ENCODE measurements at regions of chr14 and their contacts with region 1.

Region 1: GRCh38 chr14:105045710-105046326 is 19.4 kb downstream of the GPR132 start:
- DNase-seq: peak; percentile 94
- H3K4me3 Mint-ChIP-seq: no peak overlapping the region
- H3K27ac Mint-ChIP-seq: no peak overlapping the region
- H3K4me1 Mint-ChIP-seq: peaks cover 15% of the 10 kb centered on the region
- H3K27me3 Mint-ChIP-seq: peaks cover 4% of the 10 kb centered on the region

Region 2: GRCh38 chr14:104554608-104555429 is 491.0 kb before region 1 on chr14:
- CTCF ChIA-PET with region 1: no interaction called
- POLR2A ChIA-PET with region 1: no interaction called
- DNase-seq: no peak
- H3K4me3 Mint-ChIP-seq: no peak overlapping the region
- H3K27ac Mint-ChIP-seq: no peak overlapping the region
- H3K4me1 Mint-ChIP-seq: no peaks in the 10 kb centered on the region
- H3K27me3 Mint-ChIP-seq: no peaks in the 10 kb centered on the region

Region 3: DNA sequence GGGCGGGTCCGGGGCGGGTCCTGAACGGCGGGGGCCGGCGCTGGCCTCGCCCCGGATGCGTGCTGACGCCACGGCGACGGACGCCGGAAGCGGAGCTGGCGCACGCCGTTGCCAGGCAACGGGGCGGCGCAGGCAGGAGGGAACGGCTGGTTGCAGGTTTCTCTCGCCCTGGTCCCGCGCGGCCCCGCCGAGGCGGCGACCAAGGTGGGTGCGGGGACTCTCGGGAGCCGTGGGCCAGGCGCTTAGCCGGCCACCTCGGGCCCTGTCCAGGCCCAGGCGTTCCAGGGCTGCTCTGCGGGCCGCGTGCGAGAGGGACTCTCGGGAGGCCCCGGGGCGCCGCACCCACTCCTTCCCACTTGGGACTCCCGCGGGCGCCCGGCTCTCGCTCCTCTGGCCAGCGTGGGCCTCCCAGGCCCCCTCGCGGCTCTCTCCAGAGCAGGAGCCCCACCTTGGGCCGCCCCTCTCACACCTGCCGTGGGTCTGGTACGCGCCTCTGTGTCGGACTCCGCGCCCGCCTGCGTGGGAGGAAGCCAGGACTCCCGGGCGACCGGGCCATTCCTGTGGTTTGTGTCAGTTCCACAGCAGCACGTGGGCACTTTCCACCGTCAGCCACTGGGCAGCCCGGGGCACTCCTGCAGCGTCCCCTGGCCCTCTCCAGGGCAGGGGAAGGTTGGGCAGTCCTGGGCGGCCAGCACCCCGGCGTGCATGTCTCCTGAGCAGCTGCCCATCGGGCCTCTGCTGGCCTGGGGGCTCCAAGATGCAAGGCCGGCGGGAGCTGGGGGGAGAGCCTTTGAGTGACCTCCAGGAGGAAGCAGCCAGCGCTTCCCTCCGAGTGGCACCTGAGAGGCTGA is 59.9 kb before region 1 on chr14 and contains the start of gene CLBA1:
- CTCF ChIA-PET with region 1: interaction called, 23 read pairs
- POLR2A ChIA-PET with region 1: no interaction called
- DNase-seq: peak; percentile 89
- H3K4me3 Mint-ChIP-seq: peak within 1 kb of the TSS; percentile 69
- H3K27ac Mint-ChIP-seq: peak within 1 kb of the TSS; percentile 87
- H3K4me1 Mint-ChIP-seq: peaks cover 11% of the 10 kb centered on the region
- H3K27me3 Mint-ChIP-seq: peaks cover 3% of the 10 kb centered on the region
- total RNA-seq, gene CLBA1: 0.60 to 0.77 TPM

Region 4: DNA sequence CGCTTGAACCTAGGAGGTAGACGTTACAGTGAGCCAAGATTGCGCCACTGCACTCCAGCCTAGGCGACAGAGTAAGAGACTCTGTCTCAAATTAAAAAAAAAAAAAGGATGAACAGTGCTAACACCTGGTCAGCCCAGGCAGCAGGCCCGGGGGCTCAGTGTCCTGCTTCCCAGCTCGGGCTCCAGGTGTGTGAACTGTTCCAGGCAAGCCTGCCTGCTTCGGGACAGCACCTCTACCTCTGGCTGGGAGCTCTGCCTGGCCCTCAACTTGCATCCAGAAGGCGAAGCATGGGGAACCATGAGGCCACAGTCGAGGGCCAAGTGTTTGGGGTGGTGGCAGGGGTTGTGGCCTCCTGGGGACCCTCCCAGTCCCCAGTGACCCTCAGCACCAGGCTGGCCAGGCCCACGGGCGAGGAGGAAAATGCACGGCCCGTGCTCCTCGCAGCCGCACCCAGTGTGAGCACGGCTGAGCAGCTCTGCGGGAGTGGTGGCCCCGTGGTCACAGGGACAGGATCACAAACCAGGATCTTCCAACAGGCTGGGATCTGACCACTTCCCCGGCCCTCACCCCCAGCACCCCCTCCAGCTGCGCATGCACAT is 40.4 kb before region 1 on chr14:
- CTCF ChIA-PET with region 1: interaction called, 12 read pairs
- POLR2A ChIA-PET with region 1: no interaction called
- DNase-seq: no peak
- H3K4me3 Mint-ChIP-seq: no peak overlapping the region
- H3K27ac Mint-ChIP-seq: peak overlapping the region; percentile 13
- H3K4me1 Mint-ChIP-seq: peaks cover 2% of the 10 kb centered on the region
- H3K27me3 Mint-ChIP-seq: no peaks in the 10 kb centered on the region

Region 5: DNA sequence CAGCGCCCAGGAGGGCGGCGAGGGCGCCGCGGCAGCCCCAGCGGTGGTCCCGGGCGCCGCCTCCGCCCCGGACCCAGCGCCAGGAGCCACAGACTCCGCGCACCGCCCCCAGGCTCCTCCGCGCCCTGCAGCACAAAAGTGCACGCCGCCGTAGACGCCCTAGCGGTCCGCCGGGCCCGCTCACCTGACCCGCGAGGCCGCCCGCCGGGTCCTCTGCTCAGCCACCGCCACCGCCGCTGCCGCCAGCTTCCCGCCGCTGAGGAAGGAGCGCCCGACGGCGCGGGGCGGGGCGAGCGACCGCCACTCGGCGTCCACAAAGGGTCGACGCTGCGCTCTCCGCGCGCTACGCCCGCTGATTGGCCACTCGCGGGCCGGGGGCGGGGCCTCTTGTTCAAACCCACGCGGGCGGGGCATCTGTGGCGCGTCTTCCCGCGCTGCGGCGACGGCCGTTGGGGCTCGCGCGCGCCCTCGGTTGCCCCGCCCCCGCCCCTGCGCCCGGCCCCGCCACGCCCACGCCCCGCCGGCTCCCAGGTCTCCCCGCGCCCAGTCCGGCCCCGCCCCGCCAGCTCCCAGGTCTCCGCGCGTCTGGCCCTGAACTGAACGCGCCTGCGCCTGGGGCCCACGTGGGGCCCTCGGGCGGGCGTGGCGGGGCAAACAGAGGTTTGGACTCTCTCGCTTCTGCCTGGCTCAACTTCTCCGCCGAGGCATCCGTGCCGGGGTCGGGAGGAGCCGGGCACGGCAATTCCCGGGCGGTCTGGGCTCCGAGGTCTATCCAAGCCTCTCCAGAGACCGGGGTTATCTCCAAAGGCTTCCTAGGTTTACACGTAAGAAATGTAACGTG is 24.8 kb before region 1 on chr14 and contains the start of gene CDCA4:
- CTCF ChIA-PET with region 1: interaction called, 26 read pairs
- POLR2A ChIA-PET with region 1: no interaction called
- DNase-seq: peak; percentile 97
- H3K4me3 Mint-ChIP-seq: peak within 1 kb of the TSS; percentile 94
- H3K27ac Mint-ChIP-seq: peak within 1 kb of the TSS; percentile 94
- H3K4me1 Mint-ChIP-seq: peaks cover 69% of the 10 kb centered on the region
- H3K27me3 Mint-ChIP-seq: no peaks in the 10 kb centered on the region
- total RNA-seq, gene CDCA4: 53.0 to 56.6 TPM

Region 6: DNA sequence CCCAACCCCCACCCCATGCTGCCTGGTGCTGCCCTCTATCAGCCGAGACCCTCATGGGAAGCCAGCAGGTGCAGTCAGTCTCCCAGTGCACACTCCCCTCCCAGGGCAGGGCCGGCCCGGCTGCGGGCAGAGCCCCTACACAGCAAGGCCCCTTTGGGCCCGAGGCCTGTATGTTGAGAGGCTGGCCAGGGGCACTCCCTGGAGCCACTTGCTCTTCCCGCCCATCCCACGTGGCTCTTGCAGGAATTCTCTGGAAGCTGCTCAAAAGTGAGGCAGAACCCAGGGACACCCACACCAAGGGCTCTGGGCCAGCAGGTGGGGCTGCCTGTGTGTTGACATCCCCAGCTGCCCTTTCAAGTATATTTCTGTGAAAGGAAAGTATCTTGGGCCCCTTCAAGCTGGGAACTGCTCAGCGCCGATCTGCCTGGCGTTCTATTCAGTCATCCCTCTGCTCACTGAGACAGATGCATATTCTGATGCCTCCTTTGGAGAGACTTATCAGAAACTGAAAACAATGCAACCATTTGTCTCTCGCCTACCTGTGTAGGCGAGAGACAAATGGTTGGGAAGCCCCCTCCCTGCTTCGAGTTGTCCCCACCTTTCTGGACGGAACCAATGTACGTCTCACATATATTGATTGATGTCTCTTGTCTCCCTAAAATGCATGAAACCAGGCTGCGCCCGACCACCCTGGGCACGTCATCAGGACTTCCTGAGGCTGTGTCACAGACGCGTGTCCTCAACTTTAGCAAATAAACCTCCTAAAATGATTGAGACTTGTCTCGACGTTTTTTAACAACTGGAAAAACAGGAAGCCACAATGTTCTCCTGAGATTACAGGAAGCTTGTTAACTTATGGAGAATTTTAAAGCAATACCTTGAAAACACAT is 13.5 kb after region 1 on chr14:
- CTCF ChIA-PET with region 1: interaction called, 42 read pairs
- POLR2A ChIA-PET with region 1: no interaction called
- DNase-seq: peak; percentile 41
- H3K4me3 Mint-ChIP-seq: peak overlapping the region; percentile 80
- H3K27ac Mint-ChIP-seq: peak overlapping the region; percentile 94
- H3K4me1 Mint-ChIP-seq: peaks cover 54% of the 10 kb centered on the region
- H3K27me3 Mint-ChIP-seq: no peaks in the 10 kb centered on the region

Region 7: GRCh38 chr14:105075379-105076295 is 29.8 kb after region 1 on chr14:
- CTCF ChIA-PET with region 1: interaction called, 17 read pairs
- POLR2A ChIA-PET with region 1: no interaction called
- DNase-seq: peak; percentile 33
- H3K4me3 Mint-ChIP-seq: no peak overlapping the region
- H3K27ac Mint-ChIP-seq: peak overlapping the region; percentile 46
- H3K4me1 Mint-ChIP-seq: peaks cover 34% of the 10 kb centered on the region
- H3K27me3 Mint-ChIP-seq: peaks cover 10% of the 10 kb centered on the region

Region 8: GRCh38 chr14:105340821-105341733 is 295.3 kb after region 1 on chr14:
- CTCF ChIA-PET with region 1: no interaction called
- POLR2A ChIA-PET with region 1: no interaction called
- DNase-seq: no peak
- H3K4me3 Mint-ChIP-seq: no peak overlapping the region
- H3K27ac Mint-ChIP-seq: no peak overlapping the region
- H3K4me1 Mint-ChIP-seq: no peaks in the 10 kb centered on the region
- H3K27me3 Mint-ChIP-seq: no peaks in the 10 kb centered on the region

Region 9: DNA sequence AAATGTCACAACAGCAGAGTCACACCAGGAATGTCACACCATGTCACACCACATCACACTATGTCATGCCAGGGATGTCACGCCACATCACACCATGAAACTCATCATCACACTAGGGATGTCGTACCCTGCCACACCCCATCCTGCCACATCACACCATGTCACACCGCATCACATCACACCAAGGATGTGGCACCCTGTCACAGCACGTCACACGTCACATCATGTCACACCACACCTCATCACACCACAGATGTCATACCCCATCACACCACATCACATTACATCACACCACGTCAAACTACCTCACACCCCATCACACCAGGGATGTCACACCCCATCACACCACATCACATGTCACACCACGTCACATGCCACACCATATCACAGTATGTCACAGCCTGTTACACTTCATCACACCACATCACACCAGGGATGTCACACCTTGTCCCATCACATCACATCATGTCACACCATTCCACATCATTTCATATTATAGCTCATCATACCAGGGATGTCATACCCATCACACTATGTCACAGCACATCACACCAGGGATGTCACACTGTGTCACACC is 571.5 kb after region 1 on chr14:
- CTCF ChIA-PET with region 1: no interaction called
- POLR2A ChIA-PET with region 1: no interaction called
- DNase-seq: no peak
- H3K4me3 Mint-ChIP-seq: no peak overlapping the region
- H3K27ac Mint-ChIP-seq: no peak overlapping the region
- H3K4me1 Mint-ChIP-seq: no peaks in the 10 kb centered on the region
- H3K27me3 Mint-ChIP-seq: peaks cover 2% of the 10 kb centered on the region

Measured in activated CD4-positive, alpha-beta T cell treated with anti-CD3 and anti-CD28 coated beads, Interleukin-2, amount 10 ng/mL, durations not matched to agents 7 days and 5 days (primary cell).